Dendritic cell treated with granulocyte-macrophage colony-stimulating factor and Interleukin-4, amounts not matched to agents 40 ng/mL and 50 ng/mL, for 4 days (primary cell): ENCODE measurements at regions of chr3 and their contacts with region 1.

Region 1: DNA sequence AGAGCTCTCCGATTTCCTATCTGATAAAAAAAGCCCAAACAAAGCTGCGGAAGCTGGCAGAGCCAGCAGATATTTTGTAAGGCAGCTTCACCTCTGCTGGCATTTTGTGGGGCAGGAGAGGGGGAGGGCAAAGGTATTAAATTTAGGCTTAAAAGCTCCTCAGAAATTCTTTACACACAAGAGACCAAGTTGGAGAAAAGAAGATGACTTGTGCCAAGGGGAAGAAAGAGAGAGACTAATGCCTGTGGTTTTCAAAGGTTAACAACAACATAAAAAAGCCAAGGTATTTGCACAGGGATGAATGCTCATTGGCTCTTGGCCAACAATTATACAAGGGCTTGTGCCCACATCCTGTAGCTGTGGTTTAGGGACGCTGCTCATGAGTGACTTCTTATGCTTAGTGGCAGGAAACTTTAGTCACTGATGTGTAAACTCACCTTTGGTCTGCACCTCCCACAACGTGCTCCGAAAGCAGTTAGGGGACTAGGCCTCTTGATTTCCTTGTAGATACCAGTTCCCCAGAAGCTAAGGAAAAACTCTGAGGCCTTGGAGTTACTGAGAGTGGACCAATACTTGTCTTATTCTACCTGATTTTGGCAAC is 152.9 kb downstream of the TPRG1 start:
- H3K4me3 Mint-ChIP-seq: no peak overlapping the region
- H3K27ac Mint-ChIP-seq: no peak overlapping the region
- H3K4me1 Mint-ChIP-seq: no peaks in the 10 kb centered on the region
- H3K27me3 Mint-ChIP-seq: no peaks in the 10 kb centered on the region

Region 2: DNA sequence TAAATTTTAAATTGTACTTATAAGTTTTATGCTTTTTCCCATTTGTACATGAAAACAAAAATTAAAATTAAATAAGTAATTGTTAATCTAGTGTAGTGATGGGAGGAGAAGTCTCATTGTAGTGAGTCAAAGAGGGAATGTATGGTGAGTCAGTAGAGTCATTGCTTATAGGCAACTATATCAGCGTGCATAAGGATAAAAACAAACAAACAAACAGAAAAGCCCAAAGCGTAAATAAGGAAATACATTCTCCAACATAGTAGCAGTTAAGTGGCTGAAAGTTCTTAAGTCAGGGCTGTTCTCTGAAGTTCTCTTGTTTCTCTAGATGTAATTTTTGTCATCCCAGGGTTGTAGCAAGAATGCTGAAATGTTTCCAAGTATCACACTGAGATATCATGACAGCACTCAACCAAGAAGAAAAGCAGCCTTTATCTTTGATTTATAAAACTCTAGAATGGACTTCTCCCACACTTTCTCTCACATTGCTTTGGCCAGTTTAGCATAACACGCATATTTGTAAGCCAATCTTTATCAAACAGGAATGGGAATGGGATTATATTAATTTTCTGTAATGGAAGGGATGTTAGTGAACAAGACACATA is 122.4 kb after region 1 on chr3:
- intact Hi-C with region 1: loop called (anchors 5 kb)
- H3K4me3 Mint-ChIP-seq: no peak overlapping the region
- H3K27ac Mint-ChIP-seq: no peak overlapping the region
- H3K4me1 Mint-ChIP-seq: no peaks in the 10 kb centered on the region
- H3K27me3 Mint-ChIP-seq: no peaks in the 10 kb centered on the region